MCF 10A (cell line): ENCODE measurements at regions of chr20 and their contacts with region 1.

Region 1: GRCh38 chr20:35741892-35742740 is at the start of gene RBM39:
- DNase-seq: peak; percentile 100
- H3K4me3 Mint-ChIP-seq: peak within 1 kb of the TSS; percentile 97
- H3K27ac Mint-ChIP-seq: peak within 1 kb of the TSS; percentile 98
- H3K4me1 Mint-ChIP-seq: peaks cover 23% of the 10 kb centered on the region
- H3K27me3 Mint-ChIP-seq: no peaks in the 10 kb centered on the region
- CTCF ChIP-seq: peak; percentile 14
- total RNA-seq, gene RBM39: 380 and 438 TPM in 2 replicates

Region 2: GRCh38 chr20:35454881-35455609 is 287.1 kb before region 1 on chr20 and contains the start of gene CEP250:
- CTCF ChIA-PET with region 1: no interaction called
- POLR2A ChIA-PET with region 1: interaction called, 24 read pairs
- intact Hi-C with region 1: no loop called
- DNase-seq: peak; percentile 94
- H3K4me3 Mint-ChIP-seq: peak within 1 kb of the TSS; percentile 84
- H3K27ac Mint-ChIP-seq: peak within 1 kb of the TSS; percentile 99
- H3K4me1 Mint-ChIP-seq: peaks cover 24% of the 10 kb centered on the region
- H3K27me3 Mint-ChIP-seq: no peaks in the 10 kb centered on the region
- CTCF ChIP-seq: no peak
- total RNA-seq, gene CEP250: 41.0 and 44.0 TPM in 2 replicates

Region 3: DNA sequence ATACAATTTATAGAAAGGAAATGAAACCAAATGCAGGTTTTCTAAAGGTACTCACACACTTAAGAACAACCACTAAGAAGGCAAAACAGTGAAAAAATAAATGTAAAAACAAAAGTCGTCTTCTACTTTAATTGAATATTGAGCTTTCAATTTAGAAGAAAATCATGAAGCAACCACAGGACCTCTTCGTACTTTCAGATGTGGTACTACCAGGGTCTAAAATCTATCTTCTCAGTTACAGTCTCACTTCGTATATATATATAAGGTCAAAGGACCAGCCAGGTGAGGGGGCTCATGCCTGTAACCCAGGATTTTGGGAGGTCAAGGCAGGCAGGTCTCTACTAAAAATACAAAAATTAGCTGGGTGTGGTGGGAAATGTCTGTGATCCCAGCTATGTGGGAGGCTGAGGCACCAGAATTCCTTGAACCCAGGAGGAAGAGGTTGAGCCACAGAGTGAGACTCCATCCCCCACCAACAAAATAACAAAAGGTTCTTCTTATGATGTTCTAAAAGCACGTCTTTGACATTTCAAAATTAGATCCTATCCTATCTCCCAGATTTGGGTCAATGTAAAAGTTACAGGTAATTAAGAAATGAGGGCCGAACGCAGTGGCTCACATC is 30.4 kb before region 1 on chr20:
- CTCF ChIA-PET with region 1: interaction called, 4 read pairs
- POLR2A ChIA-PET with region 1: interaction called, 266 read pairs
- intact Hi-C with region 1: no loop called
- DNase-seq: no peak
- H3K4me3 Mint-ChIP-seq: no peak overlapping the region
- H3K27ac Mint-ChIP-seq: peak overlapping the region; percentile 28
- H3K4me1 Mint-ChIP-seq: peaks cover 13% of the 10 kb centered on the region
- H3K27me3 Mint-ChIP-seq: no peaks in the 10 kb centered on the region
- CTCF ChIP-seq: no peak

Region 4: DNA sequence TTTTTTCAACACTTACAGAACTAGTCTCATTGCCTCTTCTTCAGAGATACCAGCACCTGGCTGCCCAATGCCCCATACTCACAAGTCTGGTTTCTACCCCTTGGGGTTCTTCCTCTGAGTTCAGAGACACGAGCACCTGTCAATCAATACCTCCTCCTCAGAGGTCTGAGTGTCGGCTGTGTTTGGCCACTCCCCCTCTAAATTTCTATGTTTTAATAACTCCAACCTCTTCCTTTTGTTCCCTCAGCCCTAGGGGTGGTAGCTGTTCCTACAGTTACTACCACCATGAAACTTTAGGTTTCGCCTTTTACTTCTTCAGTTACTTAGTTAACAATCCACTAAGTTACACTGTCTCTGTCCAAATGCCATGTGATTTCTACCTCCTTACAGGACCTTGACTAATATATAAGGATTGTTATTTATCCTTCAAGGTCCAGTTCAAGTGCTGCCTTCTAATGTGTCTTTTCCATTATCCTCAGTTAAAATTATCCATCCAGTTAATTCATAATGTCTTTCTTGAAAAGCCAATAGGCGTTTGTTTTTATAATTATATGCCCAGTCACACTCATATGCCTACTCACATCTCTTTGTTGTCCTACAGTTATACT is 15.1 kb after region 1 on chr20:
- CTCF ChIA-PET with region 1: interaction called, 4 read pairs
- POLR2A ChIA-PET with region 1: interaction called, 617 read pairs
- intact Hi-C with region 1: no loop called
- DNase-seq: no peak
- H3K4me3 Mint-ChIP-seq: no peak overlapping the region
- H3K27ac Mint-ChIP-seq: no peak overlapping the region
- H3K4me1 Mint-ChIP-seq: peaks cover 13% of the 10 kb centered on the region
- H3K27me3 Mint-ChIP-seq: no peaks in the 10 kb centered on the region
- CTCF ChIP-seq: no peak

Region 5: GRCh38 chr20:35849706-35850105 is 107.6 kb after region 1 on chr20:
- CTCF ChIA-PET with region 1: no interaction called
- POLR2A ChIA-PET with region 1: interaction called, 12 read pairs
- intact Hi-C with region 1: no loop called
- DNase-seq: no peak
- H3K4me3 Mint-ChIP-seq: no peak overlapping the region
- H3K27ac Mint-ChIP-seq: no peak overlapping the region
- H3K4me1 Mint-ChIP-seq: peaks cover 6% of the 10 kb centered on the region
- H3K27me3 Mint-ChIP-seq: no peaks in the 10 kb centered on the region
- CTCF ChIP-seq: no peak

Region 6: DNA sequence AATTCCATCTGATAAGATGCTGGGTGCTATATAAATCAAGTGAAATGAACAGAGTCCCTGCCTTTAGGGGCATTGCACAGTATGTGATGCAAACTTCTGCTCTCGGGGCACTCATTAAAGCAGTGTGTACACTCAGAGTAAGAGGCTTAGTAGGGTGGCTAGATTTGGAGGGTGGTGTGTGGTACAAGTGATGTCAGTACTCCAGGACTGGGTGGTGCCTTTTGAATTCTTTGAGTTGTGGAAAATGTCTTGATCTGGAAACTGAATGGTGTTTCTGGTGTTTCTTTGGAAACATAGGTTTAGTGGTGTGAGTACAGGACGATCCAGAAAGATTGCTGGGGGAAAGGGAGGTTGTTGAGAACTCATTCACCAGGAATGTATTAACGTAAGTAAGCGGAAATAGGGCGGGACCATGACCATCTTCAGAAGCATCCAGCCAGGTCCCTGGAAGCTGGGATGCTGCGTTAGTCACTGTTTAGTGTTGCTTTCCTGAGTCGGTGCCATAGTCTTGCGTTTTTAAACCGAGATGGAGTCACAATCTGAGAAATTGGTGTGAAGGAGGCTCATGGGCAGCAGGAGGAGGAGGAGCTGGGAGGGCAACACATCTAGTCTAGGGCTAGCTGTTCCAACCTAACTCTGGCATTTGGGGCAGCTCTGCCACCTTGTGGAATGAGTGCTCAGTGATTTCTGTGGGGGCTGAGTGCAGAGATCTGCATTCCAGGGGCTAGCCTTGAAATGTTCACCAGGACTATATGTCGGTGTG is 141.8 kb after region 1 on chr20:
- CTCF ChIA-PET with region 1: interaction called, 6 read pairs
- POLR2A ChIA-PET with region 1: interaction called, 326 read pairs
- intact Hi-C with region 1: loop called (anchors 1 kb)
- DNase-seq: peak; percentile 99
- H3K4me3 Mint-ChIP-seq: peak overlapping the region; percentile 68
- H3K27ac Mint-ChIP-seq: peak overlapping the region; percentile 100
- H3K4me1 Mint-ChIP-seq: peaks cover 21% of the 10 kb centered on the region
- H3K27me3 Mint-ChIP-seq: no peaks in the 10 kb centered on the region
- CTCF ChIP-seq: peak; percentile 83

Region 7: GRCh38 chr20:36085686-36086267 is 343.7 kb after region 1 on chr20:
- CTCF ChIA-PET with region 1: no interaction called
- POLR2A ChIA-PET with region 1: interaction called, 20 read pairs
- intact Hi-C with region 1: no loop called
- DNase-seq: peak; percentile 92
- H3K4me3 Mint-ChIP-seq: peak overlapping the region; percentile 45
- H3K27ac Mint-ChIP-seq: peak overlapping the region; percentile 85
- H3K4me1 Mint-ChIP-seq: peaks cover 23% of the 10 kb centered on the region
- H3K27me3 Mint-ChIP-seq: no peaks in the 10 kb centered on the region
- CTCF ChIP-seq: no peak